ENCODE measurements at regions of chr2 and their contacts with region 1.

Region 1: DNA sequence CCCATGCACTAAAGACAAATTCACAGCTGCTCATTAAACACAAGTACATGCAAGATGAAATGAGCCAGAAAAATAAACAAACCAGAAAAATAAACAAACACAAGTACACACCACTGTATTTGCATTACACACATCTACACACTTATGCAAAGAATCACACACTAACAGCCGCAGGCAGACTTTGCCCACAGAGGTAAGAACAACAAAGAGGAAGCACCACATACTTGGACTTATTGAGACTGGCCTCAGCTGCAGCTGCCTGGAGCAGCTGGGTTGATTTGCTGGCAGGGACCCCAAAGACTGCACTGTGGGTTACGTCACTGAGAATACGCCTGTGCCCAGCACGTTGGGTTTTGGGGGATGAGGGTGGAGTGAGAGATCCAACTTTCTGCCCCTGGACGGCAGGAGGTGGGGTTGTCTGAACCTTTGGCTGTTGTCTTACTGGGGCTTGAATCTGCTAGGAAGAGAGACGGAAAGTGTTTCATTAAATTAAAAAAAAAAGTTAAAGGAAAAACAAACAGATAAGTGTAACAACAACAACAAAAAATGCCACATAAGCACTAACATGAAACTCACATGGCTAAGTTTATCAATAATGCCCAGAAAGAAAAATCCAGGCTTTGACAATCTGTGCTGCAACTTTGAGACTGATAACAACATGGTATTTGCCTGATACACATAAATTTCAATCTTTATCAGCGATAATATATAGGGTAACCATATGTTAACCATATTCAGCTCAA is 71.9 kb upstream of the NFU1 start:
- DNase-seq: peak in 8 of 10 donors; percentile 19 to 95 (median 60)

Region 2: GRCh38 chr2:69453475-69454129 is 55.6 kb before region 1 on chr2:
- intact Hi-C with region 1: loop called (anchors 10 kb)
- DNase-seq: no peak

Region 3: GRCh38 chr2:70049255-70049654 is 540.1 kb after region 1 on chr2:
- intact Hi-C with region 1: no loop called
- DNase-seq: no peak